Dorsolateral prefrontal cortex (tissue), 120 donors: ENCODE measurements at regions of chr1 and their contacts with region 1.

Region 1: DNA sequence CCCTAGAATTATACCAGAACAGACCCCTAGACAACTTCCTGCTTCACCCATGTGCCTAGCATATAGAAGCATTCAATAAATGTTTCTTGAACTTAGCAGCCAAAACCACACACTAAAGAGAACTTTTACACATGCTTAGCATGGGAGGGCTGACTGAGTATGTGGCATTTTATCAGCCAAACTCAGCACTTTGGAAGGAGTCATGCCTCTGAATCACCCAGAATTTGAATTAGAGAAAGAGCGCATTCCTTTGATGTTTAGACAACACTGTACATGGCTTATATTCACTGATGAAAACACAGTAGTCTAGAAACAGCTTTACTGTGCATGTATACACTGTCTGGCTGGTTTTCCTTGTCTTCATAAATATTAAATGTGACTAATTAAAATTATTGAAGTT is 26.1 kb downstream of the SPAG17 start:
- DNase-seq: no peak
- H3K4me3 ChIP-seq: no peak overlapping the region
- H3K27ac ChIP-seq: no peak overlapping the region
- H3K27me3 ChIP-seq: peaks cover 0 to 7% (median 0%) of the 10 kb centered on the region in 45 donors
- CTCF ChIP-seq: no peak

Region 2: GRCh38 chr1:117392771-117393170 is 766.2 kb before region 1 on chr1:
- intact Hi-C with region 1: no loop called
- DNase-seq: no peak
- H3K4me3 ChIP-seq: no peak overlapping the region
- H3K27ac ChIP-seq: no peak overlapping the region
- H3K27me3 ChIP-seq: no peaks in the 10 kb centered on the region
- CTCF ChIP-seq: no peak

Region 3: GRCh38 chr1:118101515-118101844 is 57.4 kb before region 1 on chr1:
- intact Hi-C with region 1: no loop called
- DNase-seq: no peak
- H3K4me3 ChIP-seq: no peak overlapping the region
- H3K27ac ChIP-seq: no peak overlapping the region
- H3K27me3 ChIP-seq: peaks cover 0 to 7% (median 0%) of the 10 kb centered on the region in 45 donors
- CTCF ChIP-seq: no peak

Region 4: DNA sequence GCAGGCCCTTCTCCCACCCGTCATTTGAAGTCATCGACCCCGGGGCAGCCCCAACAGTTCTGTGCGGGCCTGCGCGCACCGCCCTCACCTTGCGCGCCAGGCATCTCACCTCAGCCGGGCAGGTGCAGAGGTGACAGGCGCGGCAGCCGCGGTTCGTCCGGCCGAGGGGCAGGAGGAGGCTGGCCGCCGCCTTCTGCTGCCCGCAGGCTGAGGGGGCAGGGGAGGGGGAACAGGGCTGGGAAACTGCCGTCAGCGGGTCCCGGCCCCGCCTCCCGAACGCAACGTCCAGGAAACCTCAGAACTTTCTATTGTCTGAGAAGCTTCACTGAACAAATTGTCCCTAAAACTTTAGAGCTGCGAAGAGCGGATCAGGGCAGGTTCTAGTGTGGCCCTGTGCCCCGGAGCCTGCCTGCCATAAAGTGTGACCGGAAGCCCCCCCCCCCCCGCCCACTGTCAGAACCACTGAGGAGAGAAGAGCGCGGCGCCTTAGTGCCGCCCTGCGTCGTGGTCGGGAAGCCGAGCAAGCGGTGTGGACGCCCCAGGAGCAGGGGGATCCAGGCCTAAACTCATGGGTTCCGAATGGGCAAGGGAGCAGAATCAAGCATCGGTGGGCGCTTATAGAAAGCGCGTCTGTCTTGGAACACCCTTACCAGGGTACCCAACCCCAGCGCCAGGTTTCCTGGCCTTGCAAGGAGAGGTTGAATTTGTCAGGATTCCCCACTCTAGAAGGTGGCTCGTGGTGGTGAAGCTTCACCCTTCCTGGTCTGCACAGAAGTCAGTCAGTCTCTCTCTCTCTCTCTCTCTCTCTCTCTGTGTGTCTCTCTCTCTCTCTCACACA is 842.5 kb after region 1 on chr1:
- intact Hi-C with region 1: loop called in 1 of 2 experiments (anchors 5 kb)
- DNase-seq: no peak
- H3K4me3 ChIP-seq: peak overlapping the region in 23 of 59 donors; percentile 2 to 45 (median 22)
- H3K27ac ChIP-seq: no peak overlapping the region
- H3K27me3 ChIP-seq: peaks cover 25 to 99% (median 97%) of the 10 kb centered on the region in 45 donors
- CTCF ChIP-seq: no peak

Region 5: DNA sequence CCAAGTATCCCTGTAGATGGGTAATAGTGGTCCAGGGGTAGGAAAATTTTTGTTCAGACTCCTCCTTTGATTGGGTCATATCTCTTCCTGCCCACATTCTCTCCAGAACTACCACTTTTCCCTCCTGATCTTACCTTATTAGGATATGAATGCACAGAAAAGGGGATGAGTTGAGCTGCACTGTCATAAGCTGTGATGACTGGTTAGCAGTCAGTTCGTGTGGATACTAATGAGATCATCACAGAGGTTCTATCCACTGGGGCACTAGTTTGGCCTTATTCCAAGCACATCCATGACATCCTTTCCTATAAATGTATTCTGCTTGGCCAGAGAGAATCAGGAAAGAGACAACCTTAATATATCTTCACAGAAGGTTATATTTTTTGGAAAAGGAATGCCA is 851.3 kb after region 1 on chr1:
- intact Hi-C with region 1: loop called in 1 of 2 experiments (anchors 10 kb)
- DNase-seq: no peak
- H3K4me3 ChIP-seq: no peak overlapping the region
- H3K27ac ChIP-seq: no peak overlapping the region
- H3K27me3 ChIP-seq: peaks cover 11 to 55% (median 42%) of the 10 kb centered on the region in 45 donors
- CTCF ChIP-seq: no peak